ENCODE measurements at regions of chr16 and their contacts with region 1.

Region 1: DNA sequence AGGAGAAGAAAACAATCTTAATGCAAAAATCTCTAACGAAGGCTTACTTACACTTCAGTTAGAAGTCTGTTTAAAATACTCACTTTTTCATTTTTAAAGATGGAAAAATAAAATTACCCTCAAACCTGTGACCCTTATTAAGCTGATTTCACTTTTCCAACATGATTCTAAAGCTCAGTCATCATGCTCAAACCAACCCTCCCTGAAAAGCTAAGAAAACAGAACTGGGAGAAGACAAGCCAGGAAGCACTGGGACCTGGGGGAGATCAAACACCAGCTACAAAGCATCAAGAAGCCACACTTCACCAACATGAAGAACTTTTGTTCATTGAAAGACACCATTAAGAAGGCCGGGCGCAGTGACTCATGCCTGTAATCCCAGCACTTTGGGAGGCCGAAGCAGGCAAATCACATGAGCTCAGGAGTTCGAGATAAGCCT is 88.8 kb downstream of the LITAF start:
- DNase-seq: no peak
- ATAC-seq: no peak
- H3K4me3 ChIP-seq: no peak overlapping the region
- H3K27ac ChIP-seq: peak overlapping the region; percentile 84 to 90
- H3K4me1 ChIP-seq: peaks cover 0 to 3% of the 10 kb centered on the region in 2 donors
- H3K27me3 ChIP-seq: no peaks in the 10 kb centered on the region

Region 2: GRCh38 chr16:11407047-11407982 is 90.6 kb before region 1 on chr16:
- intact Hi-C with region 1: loop called in 1 of 2 experiments (anchors 5 kb)
- DNase-seq: peak in 1 of 2 donors; percentile 69
- ATAC-seq: peak; percentile 77
- H3K4me3 ChIP-seq: no peak overlapping the region
- H3K27ac ChIP-seq: no peak overlapping the region
- H3K4me1 ChIP-seq: no peaks in the 10 kb centered on the region
- H3K27me3 ChIP-seq: no peaks in the 10 kb centered on the region

Region 3: GRCh38 chr16:11546608-11547061 is 48.8 kb after region 1 on chr16:
- intact Hi-C with region 1: loop called in 1 of 2 experiments (anchors 5 kb)
- DNase-seq: no peak
- ATAC-seq: no peak
- H3K4me3 ChIP-seq: no peak overlapping the region
- H3K27ac ChIP-seq: peak overlapping the region in 1 of 2 donors; percentile 49
- H3K4me1 ChIP-seq: no peaks in the 10 kb centered on the region
- H3K27me3 ChIP-seq: no peaks in the 10 kb centered on the region

Region 4: DNA sequence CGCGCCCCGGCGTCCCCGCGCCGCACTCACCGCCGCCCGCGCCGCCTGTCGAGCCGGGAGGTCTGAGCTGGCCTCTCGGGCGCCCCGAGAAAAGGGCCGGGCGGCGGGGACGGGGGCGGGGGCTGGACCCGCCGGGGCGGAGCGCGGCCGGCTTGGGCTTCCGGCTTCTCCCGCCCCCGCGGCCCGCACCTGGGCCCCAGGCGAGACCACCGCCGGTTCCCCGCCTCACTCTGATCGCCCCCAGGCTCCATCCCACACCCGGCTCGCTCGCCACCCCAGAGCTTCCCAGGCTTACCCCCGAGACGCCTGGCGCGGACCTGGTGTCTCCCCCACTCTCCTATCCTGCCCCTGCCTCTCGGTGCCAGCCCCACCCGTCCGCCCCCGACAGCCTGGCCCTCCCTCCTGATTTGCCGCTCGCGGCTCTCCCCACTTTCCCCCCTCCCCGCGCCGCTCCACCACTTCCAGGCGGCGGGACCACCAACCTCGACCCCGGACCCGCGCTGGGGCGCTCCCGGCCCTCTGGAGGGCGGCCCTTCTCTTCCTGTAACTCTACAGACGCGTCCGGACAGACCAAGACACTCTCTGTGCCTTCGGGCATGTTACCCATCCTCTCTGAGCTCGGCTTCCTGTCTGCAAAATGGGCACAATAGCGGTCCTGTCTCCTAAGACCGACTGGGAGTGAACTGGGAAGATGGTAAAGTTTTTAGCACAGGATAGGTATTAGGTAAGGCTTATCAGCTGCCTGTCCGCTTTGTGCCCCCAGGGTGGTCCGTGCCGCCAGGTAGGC is 89.2 kb after region 1 on chr16 and contains the start of gene LITAF:
- intact Hi-C with region 1: loop called in 1 of 2 experiments (anchors 5 kb)
- DNase-seq: peak; percentile 79 to 92
- ATAC-seq: peak; percentile 84
- H3K4me3 ChIP-seq: peak within 1 kb of the TSS; percentile 95 to 97
- H3K27ac ChIP-seq: peak within 1 kb of the TSS; percentile 95 to 97
- H3K4me1 ChIP-seq: peaks cover 0 to 10% of the 10 kb centered on the region in 2 donors
- H3K27me3 ChIP-seq: no peaks in the 10 kb centered on the region
- total RNA-seq, gene LITAF: 145 to 157 TPM

Region 5: DNA sequence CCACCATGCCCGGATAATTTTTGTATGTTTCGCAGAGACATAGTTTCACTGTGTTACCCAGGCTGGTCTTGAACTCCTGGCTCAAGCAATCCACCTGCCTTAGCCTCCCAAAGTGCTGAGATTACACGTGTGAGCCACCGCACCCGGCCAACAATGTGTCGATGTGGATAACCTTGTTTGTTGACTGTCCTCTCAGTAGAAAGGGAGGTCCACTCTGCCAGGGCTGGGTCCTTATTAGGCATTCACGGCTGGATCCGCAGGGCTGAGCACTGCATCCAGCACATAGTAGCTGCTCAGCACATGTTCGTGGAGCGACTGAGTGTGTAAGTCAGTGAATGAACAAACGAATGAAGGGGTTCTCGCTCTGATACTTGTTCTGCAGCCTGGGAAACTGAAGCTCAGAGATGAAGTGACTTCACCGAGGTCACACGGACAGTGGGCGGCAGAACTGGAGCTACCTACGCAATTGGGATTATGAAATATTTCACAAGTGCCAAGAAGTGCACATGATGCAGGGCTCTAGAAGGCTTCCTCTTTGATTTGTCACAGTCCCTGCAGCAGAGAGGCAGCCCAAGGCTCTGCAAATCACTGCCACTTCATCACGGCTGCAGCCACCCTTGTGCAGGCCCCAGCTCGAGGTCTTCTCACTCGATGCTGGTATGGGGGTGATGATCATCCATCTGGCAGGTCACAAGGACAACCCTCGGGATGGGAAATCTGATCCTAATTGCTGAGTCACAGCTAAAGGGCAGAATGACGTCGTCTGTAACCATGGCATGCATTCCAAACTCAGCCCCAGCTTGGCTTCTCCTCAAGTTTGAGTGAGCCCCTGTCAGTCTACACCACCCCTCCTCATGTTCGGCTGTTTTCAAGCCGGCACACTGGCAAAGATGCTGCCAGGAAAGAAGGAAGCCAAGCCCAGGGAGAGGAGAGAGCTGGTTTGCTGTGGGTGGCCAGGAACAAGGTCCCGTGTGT is 142.3 kb after region 1 on chr16:
- intact Hi-C with region 1: loop called in 1 of 2 experiments (anchors 10 kb)
- DNase-seq: peak; percentile 86 to 90
- ATAC-seq: peak; percentile 92
- H3K4me3 ChIP-seq: no peak overlapping the region
- H3K27ac ChIP-seq: peak overlapping the region; percentile 46 to 71
- H3K4me1 ChIP-seq: no peaks in the 10 kb centered on the region
- H3K27me3 ChIP-seq: no peaks in the 10 kb centered on the region

Region 6: DNA sequence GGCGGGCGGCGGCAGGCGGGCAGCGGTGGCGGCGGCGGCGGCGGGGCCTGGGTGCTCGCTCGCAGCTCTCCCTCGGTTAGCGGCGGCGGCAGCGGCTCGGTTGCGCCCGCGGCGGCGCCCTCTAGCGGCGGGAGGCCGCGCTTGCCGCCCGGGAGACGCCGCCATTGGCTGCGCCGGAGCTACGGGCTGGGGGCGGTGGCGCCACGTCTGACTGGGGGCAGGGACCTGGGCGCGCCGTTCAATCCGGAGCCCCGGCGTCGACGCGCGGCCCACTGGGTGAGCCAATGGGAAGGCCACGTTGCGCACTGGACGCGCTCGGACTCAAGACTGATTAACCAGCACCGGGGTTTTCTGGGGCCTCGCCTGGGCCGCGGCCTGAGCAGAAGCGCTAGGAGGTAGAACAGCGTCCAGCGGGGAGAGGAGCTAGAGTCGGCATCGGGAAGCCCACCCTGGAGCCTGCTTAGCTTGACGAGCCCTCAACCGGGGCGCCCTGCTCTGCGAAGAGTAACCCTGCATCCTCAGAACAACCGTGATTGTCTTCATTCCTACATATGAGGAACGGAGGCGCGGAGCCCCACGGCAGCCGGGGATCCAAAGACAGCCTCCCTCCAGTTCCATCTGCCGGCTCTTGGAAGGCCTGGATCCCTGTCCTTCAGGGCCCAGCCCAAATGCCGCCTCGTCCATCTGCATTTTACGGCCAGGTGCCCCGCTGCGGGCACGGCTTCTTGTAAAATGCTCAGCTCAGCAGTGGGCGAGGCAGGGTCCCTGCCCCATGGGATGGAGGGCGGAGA is 299.5 kb after region 1 on chr16 and contains the start of gene ZC3H7A:
- intact Hi-C with region 1: loop called in 1 of 2 experiments (anchors 1 kb)
- DNase-seq: peak; percentile 99
- ATAC-seq: peak; percentile 98
- H3K4me3 ChIP-seq: peak within 1 kb of the TSS; percentile 94 to 98
- H3K27ac ChIP-seq: peak within 1 kb of the TSS; percentile 91 to 95
- H3K4me1 ChIP-seq: no peaks in the 10 kb centered on the region
- H3K27me3 ChIP-seq: no peaks in the 10 kb centered on the region
- total RNA-seq, gene ZC3H7A: 69.7 to 86.2 TPM